Heart right ventricle (tissue), 16 donors: ENCODE measurements at regions of chr11 and their contacts with region 1.

Region 1: DNA sequence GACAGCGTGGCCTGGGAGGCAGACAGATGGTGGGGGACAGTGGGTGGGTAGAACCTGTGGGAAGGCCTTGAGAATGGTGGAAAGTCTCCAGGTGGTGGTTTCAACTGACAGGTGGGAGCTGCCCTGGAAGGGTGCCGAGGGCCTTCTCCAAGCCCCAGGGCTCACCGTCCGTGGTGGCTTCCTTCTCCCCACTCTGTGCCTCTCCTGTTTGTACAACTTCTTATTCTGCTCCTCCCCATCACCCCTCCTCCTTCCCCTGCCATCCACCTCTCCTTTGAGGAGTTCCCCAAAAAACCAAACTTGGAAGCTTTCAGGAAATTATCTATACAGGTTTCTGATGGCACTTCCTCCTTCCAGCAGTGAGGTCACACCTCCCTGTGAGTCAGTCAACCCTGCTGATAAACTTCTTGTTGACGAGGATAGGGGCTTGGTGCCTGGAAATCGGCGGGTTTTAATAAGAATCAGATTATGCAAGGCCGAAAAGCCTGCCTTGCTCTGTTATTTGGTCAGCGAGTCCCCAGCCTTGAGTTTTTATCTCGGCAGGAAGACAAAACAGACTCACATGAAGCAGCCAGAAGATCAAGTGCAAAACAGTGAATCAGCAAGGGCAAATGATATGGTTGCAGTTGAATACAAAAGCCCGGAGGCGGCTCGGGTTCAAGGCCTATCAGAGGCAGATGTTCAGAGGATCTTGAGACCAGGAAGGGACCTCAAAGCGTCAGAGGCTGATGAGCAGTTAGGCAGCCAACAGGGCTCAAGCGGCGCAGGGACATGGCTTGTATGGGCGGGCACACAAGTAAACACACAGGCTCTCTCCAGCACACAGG is 9.5 kb upstream of the ST3GAL4 start:
- DNase-seq: peak; percentile 53 to 58
- ATAC-seq: peak; percentile 18 to 78 (median 36)
- H3K4me3 ChIP-seq: no peak overlapping the region
- H3K27ac ChIP-seq: peak overlapping the region; percentile 54 to 86 (median 72)
- H3K4me1 ChIP-seq: peaks cover 24 to 77% (median 60%) of the 10 kb centered on the region in 9 donors
- H3K27me3 ChIP-seq: no peaks in the 10 kb centered on the region
- CTCF ChIP-seq: no peak

Region 2: GRCh38 chr11:126391970-126392639 is 46.1 kb after region 1 on chr11:
- intact Hi-C with region 1: loop called in 1 of 10 experiments (anchors 2 kb)
- DNase-seq: peak in 1 of 2 donors; percentile 56
- ATAC-seq: peak; percentile 41 to 67 (median 54)
- H3K4me3 ChIP-seq: peak overlapping the region in 2 of 10 donors; percentile 3 to 17
- H3K27ac ChIP-seq: peak overlapping the region; percentile 40 to 87 (median 80)
- H3K4me1 ChIP-seq: peaks cover 16 to 83% (median 58%) of the 10 kb centered on the region in 9 donors
- H3K27me3 ChIP-seq: no peaks in the 10 kb centered on the region
- CTCF ChIP-seq: peak in 6 of 9 donors; percentile 29 to 58 (median 39)

Region 3: GRCh38 chr11:126452241-126453101 is 106.5 kb after region 1 on chr11:
- intact Hi-C with region 1: no loop called
- DNase-seq: no peak
- ATAC-seq: peak in 3 of 8 donors; percentile 18 to 47 (median 29)
- H3K4me3 ChIP-seq: no peak overlapping the region
- H3K27ac ChIP-seq: no peak overlapping the region
- H3K4me1 ChIP-seq: no peaks in the 10 kb centered on the region
- H3K27me3 ChIP-seq: peaks cover 0 to 31% (median 14%) of the 10 kb centered on the region in 7 donors
- CTCF ChIP-seq: no peak